Dorsolateral prefrontal cortex (tissue), 120 donors: ENCODE measurements at regions of chr3 and their contacts with region 1.

Region 1: GRCh38 chr3:194134757-194135528 is 1.0 kb upstream of the HES1 start:
- DNase-seq: peak; percentile 19 to 80 (median 74)
- H3K4me3 ChIP-seq: peak overlapping the region; percentile 49 to 77 (median 68)
- H3K27ac ChIP-seq: peak overlapping the region in 57 of 59 donors; percentile 23 to 94 (median 86)
- H3K27me3 ChIP-seq: peaks cover 0 to 3% (median 0%) of the 10 kb centered on the region in 45 donors
- CTCF ChIP-seq: peak in 6 of 56 donors; percentile 4 to 30 (median 8)

Region 2: DNA sequence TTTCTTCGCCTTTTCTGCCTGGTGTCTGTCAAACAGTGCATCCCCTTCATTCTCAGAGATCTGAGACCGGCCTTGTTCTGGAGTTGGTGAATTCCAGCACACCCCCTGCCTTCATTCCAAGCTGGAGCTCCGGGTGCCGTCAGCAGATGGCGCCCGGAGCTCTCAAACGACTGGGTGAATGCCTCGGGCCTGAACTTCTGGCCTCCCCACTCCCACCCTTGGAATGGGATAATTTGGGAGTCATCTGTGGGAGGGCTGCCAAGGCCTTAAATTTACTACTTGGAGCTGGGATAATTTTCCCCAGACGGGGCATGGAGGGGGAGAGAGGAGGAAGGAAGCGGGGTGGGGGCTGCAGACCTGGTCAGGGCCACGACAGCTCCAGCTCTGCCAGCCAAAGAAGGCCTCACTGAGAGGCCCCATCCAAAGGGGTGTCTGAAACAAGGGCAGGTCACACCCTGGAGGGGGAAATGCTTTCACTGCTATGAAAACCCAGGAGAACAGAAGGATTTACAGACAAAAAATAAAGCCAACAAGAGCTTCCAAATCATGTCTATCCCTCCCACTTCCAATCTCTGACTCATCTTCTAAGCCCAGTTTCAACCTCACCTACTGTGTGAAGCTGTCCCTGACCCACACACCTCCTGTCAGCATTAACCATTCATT is 354.0 kb before region 1 on chr3:
- intact Hi-C with region 1: loop called (anchors 2 to 5 kb)
- DNase-seq: peak; percentile 9 to 63 (median 52)
- H3K4me3 ChIP-seq: peak overlapping the region in 1 of 59 donors; percentile 15
- H3K27ac ChIP-seq: no peak overlapping the region
- H3K27me3 ChIP-seq: peaks cover 0 to 12% (median 0%) of the 10 kb centered on the region in 45 donors
- CTCF ChIP-seq: peak; percentile 29 to 87 (median 72)

Region 3: GRCh38 chr3:193788189-193788991 is 346.6 kb before region 1 on chr3:
- intact Hi-C with region 1: loop called (anchors 2 to 5 kb)
- DNase-seq: peak in 9 of 10 donors; percentile 7 to 68 (median 51)
- H3K4me3 ChIP-seq: no peak overlapping the region
- H3K27ac ChIP-seq: peak overlapping the region in 3 of 59 donors; percentile 8 to 31 (median 21)
- H3K27me3 ChIP-seq: peaks cover 0 to 11% (median 0%) of the 10 kb centered on the region in 45 donors
- CTCF ChIP-seq: peak; percentile 20 to 88 (median 75)

Region 4: DNA sequence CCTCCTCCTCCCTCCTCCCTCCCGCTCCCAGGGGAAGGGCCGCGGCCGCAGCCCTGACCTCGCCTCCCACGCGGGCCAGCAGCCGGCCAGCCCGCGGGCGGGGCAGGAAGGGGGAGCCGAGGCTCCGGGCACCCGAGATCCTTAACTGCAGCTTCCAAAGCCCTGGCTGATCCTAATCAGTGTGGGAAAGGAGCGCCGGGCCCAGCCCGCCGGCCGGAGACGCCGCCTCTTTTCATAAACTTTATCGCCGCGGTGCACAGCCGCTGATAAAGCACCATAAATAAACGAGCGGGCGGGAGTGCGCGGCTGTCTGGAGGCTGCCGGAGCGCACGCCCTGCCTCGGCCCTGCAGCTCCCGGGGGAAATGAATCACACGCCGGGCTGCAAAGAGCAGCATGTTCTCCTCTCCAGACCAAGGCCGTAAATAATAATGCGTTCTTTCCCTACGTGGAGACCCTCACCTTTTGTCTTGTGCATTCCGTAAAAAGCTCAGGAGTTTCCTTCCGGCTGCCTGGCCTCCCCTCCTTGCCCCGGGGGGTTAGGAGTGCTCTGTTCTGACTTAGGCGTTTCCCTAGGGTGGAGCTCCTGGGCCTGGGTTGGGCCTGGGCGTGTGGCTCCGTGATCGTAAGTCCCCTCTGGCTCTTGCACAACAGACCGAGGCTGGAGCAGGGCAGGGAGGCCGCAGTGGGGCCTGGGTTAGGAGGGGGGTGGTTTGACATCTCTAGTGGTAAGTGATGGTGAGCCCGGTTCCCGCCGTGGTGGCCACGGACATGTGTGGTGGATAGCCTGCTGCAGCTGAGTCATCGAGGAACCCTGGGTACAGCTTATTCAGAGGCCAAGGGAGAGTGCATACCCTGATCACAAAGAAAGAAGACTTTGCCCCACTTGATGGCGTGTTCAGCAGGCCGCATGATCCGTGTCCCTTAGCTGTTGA is 131.6 kb before region 1 on chr3:
- intact Hi-C with region 1: loop called in 1 of 2 experiments (anchors 2 kb)
- DNase-seq: peak in 4 of 10 donors; percentile 32 to 63 (median 54)
- H3K4me3 ChIP-seq: peak overlapping the region; percentile 28 to 70 (median 55)
- H3K27ac ChIP-seq: peak overlapping the region in 23 of 59 donors; percentile 9 to 70 (median 41)
- H3K27me3 ChIP-seq: peaks cover 0 to 7% (median 0%) of the 10 kb centered on the region in 45 donors
- CTCF ChIP-seq: no peak

Region 5: DNA sequence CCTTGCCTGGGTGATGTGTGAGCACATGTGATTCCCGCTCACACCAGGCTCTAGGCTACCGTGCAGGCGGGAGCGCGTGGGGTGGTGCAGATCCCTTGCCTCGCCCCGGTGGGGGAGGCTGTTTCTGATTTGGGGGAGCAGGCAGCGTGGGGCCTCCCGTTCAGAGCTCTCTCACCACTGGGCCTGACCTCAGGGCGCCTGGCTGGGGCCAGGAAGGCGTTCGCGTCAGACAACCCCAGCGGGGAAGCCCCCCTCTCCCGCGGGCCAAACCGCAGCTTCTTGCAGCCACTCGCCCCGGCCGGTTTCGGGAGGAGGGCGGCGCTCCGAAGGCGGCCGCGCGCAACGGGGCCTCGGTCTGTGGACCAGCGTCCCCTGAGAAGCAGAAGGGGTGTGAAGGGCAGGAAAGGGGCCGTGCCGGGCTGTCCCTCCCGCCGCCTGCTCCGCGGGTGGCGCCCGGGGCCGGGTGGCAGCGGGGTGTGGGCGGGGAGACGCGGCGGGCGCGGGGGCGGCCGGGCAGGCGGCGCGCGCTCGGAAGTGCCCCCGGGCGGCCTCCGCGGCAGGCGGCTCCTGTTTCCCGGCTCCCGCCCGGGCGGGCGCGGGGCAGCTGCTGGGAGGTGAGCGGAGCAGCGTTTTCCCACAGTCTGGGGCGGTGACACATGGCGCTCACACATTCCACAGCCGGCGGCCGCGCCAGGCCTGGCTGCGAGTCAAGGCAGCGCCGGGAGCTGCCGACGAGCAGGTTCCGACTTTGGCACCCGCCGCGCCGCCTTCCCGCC is 64.1 kb before region 1 on chr3:
- intact Hi-C with region 1: loop called (anchors 2 kb)
- DNase-seq: peak in 9 of 10 donors; percentile 19 to 79 (median 65)
- H3K4me3 ChIP-seq: peak overlapping the region; percentile 45 to 80 (median 65)
- H3K27ac ChIP-seq: peak overlapping the region in 52 of 59 donors; percentile 13 to 90 (median 75)
- H3K27me3 ChIP-seq: no peaks in the 10 kb centered on the region
- CTCF ChIP-seq: peak in 2 of 56 donors; percentile 10 to 24

Region 6: GRCh38 chr3:194103983-194104751 is 30.8 kb before region 1 on chr3:
- intact Hi-C with region 1: no loop called
- DNase-seq: no peak
- H3K4me3 ChIP-seq: no peak overlapping the region
- H3K27ac ChIP-seq: no peak overlapping the region
- H3K27me3 ChIP-seq: peaks cover 0 to 9% (median 0%) of the 10 kb centered on the region in 45 donors
- CTCF ChIP-seq: no peak